Activated B cell treated with CpG ODN at 0.5 μM for 24 hours (primary cell): ENCODE measurements at regions of chr6 and their contacts with region 1.

Region 1: DNA sequence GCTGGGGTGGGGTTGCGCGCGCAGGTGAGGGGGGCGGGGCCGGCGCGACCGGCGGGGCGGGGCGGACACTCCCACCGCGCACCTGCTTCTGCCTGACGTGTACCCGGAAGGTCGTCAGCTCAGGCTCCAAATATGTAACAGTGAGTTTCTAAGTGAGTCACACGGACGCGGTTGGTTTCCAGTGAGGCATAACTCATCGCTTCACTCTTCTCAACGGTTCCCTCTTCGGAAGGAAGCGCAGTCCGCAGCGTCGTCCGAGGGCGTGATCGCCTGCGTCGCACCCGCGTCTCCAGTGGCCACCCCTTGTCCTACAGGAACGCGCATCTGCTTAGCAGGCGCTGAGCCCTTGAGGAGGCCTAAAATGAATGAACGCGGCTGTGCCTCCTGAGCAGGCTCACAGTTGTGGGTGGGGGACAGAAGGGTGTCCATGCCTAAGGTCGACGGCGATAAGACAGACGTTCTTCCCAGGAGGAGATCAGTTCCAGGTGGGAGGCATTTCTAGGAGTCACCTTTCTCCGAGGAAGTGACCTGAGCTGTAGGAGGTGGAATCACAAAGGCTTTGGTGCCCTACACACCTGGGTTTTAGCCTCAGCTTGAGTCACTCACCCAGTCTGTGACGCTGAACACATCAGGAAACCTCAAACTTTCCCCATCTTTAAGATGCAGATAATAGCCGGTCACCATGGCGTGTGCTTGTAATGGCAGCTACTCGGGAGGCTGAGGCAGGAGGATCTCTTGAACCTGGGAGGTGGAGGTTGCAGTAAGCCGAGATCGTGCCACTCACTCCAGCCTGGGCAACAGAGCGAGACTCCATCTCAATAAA is 50.9 kb upstream of the EZR start:
- DNase-seq: peak; percentile 80
- ATAC-seq: peak; percentile 72
- H3K4me3 Mint-ChIP-seq: peak overlapping the region; percentile 85
- H3K27ac Mint-ChIP-seq: peak overlapping the region; percentile 100
- H3K4me1 Mint-ChIP-seq: peaks cover 63% of the 10 kb centered on the region
- H3K27me3 Mint-ChIP-seq: no peaks in the 10 kb centered on the region
- CTCF ChIP-seq: no peak

Region 2: GRCh38 chr6:157764178-157765033 is 1105.6 kb before region 1 on chr6:
- CTCF ChIA-PET with region 1: no interaction called
- POLR2A ChIA-PET with region 1: no interaction called
- intact Hi-C with region 1: loop called (anchors 10 kb)
- DNase-seq: peak; percentile 73
- ATAC-seq: peak; percentile 43
- H3K4me3 Mint-ChIP-seq: peak overlapping the region; percentile 81
- H3K27ac Mint-ChIP-seq: peak overlapping the region; percentile 99
- H3K4me1 Mint-ChIP-seq: peaks cover 95% of the 10 kb centered on the region
- H3K27me3 Mint-ChIP-seq: no peaks in the 10 kb centered on the region
- CTCF ChIP-seq: no peak

Region 3: GRCh38 chr6:158718461-158719046 is 151.5 kb before region 1 on chr6:
- CTCF ChIA-PET with region 1: interaction called, 3 read pairs
- POLR2A ChIA-PET with region 1: interaction called, 92 read pairs
- intact Hi-C with region 1: loop called (anchors 1 kb)
- DNase-seq: no peak
- ATAC-seq: no peak
- H3K4me3 Mint-ChIP-seq: no peak overlapping the region
- H3K27ac Mint-ChIP-seq: peak overlapping the region; percentile 97
- H3K4me1 Mint-ChIP-seq: peaks cover 78% of the 10 kb centered on the region
- H3K27me3 Mint-ChIP-seq: no peaks in the 10 kb centered on the region
- CTCF ChIP-seq: no peak

Region 4: DNA sequence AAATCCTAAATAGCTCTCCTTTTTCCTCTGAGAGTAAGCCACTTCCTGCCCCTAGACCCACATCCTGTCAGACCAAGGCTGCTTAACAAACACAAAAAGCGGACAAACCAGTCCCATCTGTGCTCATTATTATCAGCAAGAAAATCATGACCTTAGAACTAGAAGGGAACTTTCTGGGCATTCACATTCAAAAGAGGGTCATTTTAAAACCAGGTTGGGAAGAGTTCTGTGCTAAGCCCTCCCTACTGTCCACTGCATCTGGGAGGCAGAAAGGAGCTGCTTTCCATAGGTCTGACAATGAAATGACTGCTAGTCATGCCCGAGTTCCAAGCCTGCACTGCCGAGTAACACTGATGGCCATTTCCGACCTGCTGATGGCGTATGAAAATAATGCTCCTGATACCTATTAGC is 66.3 kb before region 1 on chr6:
- CTCF ChIA-PET with region 1: interaction called, 16 read pairs
- POLR2A ChIA-PET with region 1: interaction called, 273 read pairs
- intact Hi-C with region 1: loop called (anchors 2 kb)
- DNase-seq: no peak
- ATAC-seq: peak; percentile 65
- H3K4me3 Mint-ChIP-seq: peak overlapping the region; percentile 78
- H3K27ac Mint-ChIP-seq: peak overlapping the region; percentile 82
- H3K4me1 Mint-ChIP-seq: peaks cover 95% of the 10 kb centered on the region
- H3K27me3 Mint-ChIP-seq: no peaks in the 10 kb centered on the region
- CTCF ChIP-seq: no peak

Region 5: GRCh38 chr6:158826801-158827573 is 43.0 kb before region 1 on chr6:
- CTCF ChIA-PET with region 1: interaction called, 9 read pairs
- POLR2A ChIA-PET with region 1: interaction called, 454 read pairs
- intact Hi-C with region 1: loop called (anchors 1 kb)
- DNase-seq: no peak
- ATAC-seq: peak; percentile 87
- H3K4me3 Mint-ChIP-seq: peak overlapping the region; percentile 52
- H3K27ac Mint-ChIP-seq: peak overlapping the region; percentile 93
- H3K4me1 Mint-ChIP-seq: peaks cover 39% of the 10 kb centered on the region
- H3K27me3 Mint-ChIP-seq: no peaks in the 10 kb centered on the region
- CTCF ChIP-seq: no peak

Region 6: DNA sequence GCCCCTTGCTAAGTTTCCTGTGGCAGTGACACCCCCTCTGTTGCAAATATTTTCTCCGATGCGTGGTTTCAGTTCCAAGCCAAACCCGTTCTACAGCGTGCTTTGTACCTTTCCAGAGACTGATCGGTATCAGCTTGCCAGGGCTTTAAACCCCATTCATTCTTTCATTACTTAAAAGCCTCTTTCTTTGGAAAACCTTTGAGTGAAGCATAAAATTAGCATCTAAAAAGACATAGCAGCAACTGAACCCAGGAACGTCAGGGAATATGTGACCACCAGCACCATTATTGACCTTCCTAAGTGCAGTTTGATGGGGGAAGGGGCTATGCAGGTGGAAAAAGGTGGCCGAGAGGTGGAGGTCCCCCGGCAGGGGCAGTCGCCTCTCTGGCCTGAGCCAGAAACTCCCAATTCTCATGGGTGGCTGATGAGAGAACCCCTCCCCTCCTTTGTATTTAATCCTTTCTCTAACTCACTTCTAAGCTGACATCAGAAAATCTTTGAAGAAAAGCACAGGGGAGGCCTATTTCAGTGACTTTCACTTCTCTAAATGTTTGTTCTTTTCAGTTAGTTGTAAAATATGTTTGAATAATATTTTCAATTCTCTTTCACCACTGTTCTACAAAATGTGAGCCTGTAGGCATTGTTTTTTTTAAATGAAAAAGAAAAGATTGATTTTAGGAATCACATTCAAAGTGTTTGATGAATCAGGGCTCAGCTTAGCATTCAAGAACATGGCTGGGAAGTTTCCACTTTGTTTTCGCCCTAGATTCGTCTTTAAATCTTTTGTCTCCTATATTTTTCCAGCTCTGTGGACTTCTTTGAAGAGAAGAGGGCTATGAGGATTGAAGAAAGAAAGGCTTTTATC is 40.7 kb after region 1 on chr6:
- CTCF ChIA-PET with region 1: interaction called, 9 read pairs
- POLR2A ChIA-PET with region 1: interaction called, 120 read pairs
- intact Hi-C with region 1: loop called (anchors 1 kb)
- DNase-seq: peak; percentile 36
- ATAC-seq: peak; percentile 76
- H3K4me3 Mint-ChIP-seq: peak overlapping the region; percentile 80
- H3K27ac Mint-ChIP-seq: peak overlapping the region; percentile 96
- H3K4me1 Mint-ChIP-seq: peaks cover 58% of the 10 kb centered on the region
- H3K27me3 Mint-ChIP-seq: no peaks in the 10 kb centered on the region
- CTCF ChIP-seq: no peak

Region 7: GRCh38 chr6:158972241-158973233 is 102.5 kb after region 1 on chr6:
- CTCF ChIA-PET with region 1: interaction called, 11 read pairs
- POLR2A ChIA-PET with region 1: interaction called, 21 read pairs
- intact Hi-C with region 1: loop called (anchors 1 kb)
- DNase-seq: no peak
- ATAC-seq: peak; percentile 60
- H3K4me3 Mint-ChIP-seq: no peak overlapping the region
- H3K27ac Mint-ChIP-seq: no peak overlapping the region
- H3K4me1 Mint-ChIP-seq: peaks cover 6% of the 10 kb centered on the region
- H3K27me3 Mint-ChIP-seq: no peaks in the 10 kb centered on the region
- CTCF ChIP-seq: peak; percentile 57